Thyroid gland (tissue), 4 donors: ENCODE measurements at regions of chr2 and their contacts with region 1.

Region 1: DNA sequence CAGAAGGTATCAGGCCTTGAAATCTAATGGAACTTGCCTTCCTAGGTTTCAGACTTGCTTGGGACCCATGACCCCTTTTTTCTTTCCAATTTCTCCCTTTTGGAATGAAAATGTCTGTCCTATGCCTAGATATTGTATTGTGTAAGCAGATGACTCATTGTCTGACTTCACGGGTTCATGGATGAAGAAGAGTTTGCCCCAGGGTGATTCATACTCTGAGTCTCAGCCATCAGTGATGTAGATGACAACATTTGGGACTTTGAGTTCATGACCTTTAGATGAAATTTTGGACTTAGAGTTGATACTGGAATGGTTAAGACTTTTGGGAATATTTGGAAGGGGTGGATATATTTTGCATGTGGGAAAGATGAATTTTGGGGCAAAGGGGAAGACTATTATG is 11.2 kb upstream of the SCYGR5 start:
- DNase-seq: no peak
- H3K4me3 ChIP-seq: no peak overlapping the region
- H3K27ac ChIP-seq: no peak overlapping the region
- H3K4me1 ChIP-seq: no peaks in the 10 kb centered on the region
- H3K27me3 ChIP-seq: no peaks in the 10 kb centered on the region
- CTCF ChIP-seq: no peak
- POLR2A ChIP-seq: no peak

Region 2: DNA sequence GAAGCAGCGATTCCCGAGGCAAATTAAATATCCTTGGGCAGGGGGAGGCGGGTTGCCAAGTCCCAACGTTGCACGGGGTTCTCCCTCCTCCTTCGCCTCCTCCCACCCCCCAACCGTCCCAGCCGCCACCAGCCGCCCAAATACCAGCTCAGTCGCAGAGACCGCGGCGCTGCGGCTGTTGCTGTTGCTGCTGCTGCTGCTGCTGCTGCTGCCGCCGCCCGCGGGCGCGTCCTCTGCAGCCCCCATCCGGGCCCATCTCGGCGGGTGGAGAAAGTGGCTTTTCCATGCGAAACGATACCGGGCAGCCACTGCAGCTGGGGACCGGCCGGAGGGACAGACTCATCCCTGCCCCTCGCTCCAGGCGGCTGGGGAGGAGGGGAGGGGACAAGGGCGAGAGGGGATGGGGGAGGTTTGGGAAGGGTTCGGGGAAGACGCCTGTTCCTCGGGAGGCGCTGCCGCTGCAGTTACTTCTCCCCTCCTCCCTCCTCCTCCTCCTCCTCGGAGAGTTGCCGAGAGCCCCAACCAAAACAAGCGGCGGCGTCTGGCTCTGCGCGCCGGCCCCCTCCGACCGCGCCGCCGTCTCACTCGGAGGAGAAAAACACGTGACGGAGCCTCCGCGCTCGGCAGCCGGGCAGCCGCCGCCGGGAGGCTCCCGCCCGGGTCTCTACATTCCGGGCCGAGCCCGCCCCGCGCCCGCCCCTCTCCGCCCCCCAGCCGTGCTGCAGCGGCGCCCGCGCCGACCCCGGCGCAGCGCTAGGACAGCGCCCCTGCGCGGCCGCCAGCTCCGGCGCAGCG is 856.1 kb before region 1 on chr2 and contains the start of gene IRS1:
- intact Hi-C with region 1: no loop called
- DNase-seq: peak; percentile 84 to 87
- H3K4me3 ChIP-seq: peak within 1 kb of the TSS; percentile 72 to 76 (median 76)
- H3K27ac ChIP-seq: peak within 1 kb of the TSS; percentile 84 to 98 (median 94)
- H3K4me1 ChIP-seq: peaks cover 16 to 22% of the 10 kb centered on the region in 2 donors
- H3K27me3 ChIP-seq: no peaks in the 10 kb centered on the region
- CTCF ChIP-seq: peak in 2 of 6 experiments; percentile 60 to 87
- POLR2A ChIP-seq: peak in 1 of 2 donors; percentile 72
- total RNA-seq, gene IRS1: 61.9 to 166 (median 98.7) TPM

Region 3: GRCh38 chr2:227884511-227884947 is 229.1 kb after region 1 on chr2:
- intact Hi-C with region 1: loop called (anchors 10 kb)
- DNase-seq: peak; percentile 73 to 77
- H3K4me3 ChIP-seq: no peak overlapping the region
- H3K27ac ChIP-seq: no peak overlapping the region
- H3K4me1 ChIP-seq: no peaks in the 10 kb centered on the region
- H3K27me3 ChIP-seq: no peaks in the 10 kb centered on the region
- CTCF ChIP-seq: peak; percentile 45 to 86 (median 60)
- POLR2A ChIP-seq: no peak